HepG2 (cell line): ENCODE measurements at regions of chr5 and their contacts with region 1.

Region 1: GRCh38 chr5:132807163-132807838 is 5.8 kb upstream of the SOWAHA start:
- DNase-seq: peak; percentile 99
- ATAC-seq: peak; percentile 97
- H3K4me3 ChIP-seq: peak overlapping the region; percentile 64 to 85 (median 82)
- H3K27ac ChIP-seq: peak overlapping the region; percentile 100
- H3K4me1 ChIP-seq: peaks cover 58% of the 10 kb centered on the region
- H3K27me3 ChIP-seq: no peaks in the 10 kb centered on the region; a peak in 1 of 5 replicates
- CTCF ChIP-seq: peak; percentile 92
- EP300 ChIP-seq: peak; percentile 81 to 93
- POLR2A ChIP-seq: peak; percentile 81 to 95
- RAD21 ChIP-seq: peak; percentile 95

Region 2: DNA sequence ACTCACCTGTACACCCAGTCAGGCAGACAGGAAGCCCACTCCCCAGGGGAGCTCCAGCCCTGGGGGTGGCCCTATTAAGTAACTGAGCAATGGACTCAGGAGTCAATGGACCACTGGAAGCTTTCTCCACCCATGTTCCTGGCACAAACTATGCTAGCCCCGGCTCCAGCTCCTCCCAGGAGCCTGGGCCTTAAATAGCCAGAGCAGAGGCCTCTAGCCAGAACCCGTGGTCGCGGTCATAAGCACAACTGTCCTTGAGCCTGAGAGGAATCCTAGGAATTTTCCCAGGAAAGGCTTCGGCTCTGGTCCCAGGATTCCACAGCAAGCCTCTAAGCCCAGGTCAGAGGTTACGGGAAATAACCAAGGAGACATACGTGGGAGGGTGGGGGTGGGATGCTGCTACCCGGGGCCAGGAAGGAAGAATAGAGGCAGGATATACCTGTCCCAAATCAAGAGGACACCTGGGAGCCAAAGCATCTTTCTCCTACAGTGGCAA is 35.8 kb before region 1 on chr5:
- CTCF ChIA-PET with region 1: no interaction called
- POLR2A ChIA-PET with region 1: interaction called, 21 read pairs
- in situ Hi-C with region 1: no loop called
- intact Hi-C with region 1: loop called (anchors 1 kb)
- DNase-seq: peak; percentile 90
- ATAC-seq: peak; percentile 83
- H3K4me3 ChIP-seq: peak overlapping the region in 1 of 3 experiments; percentile 49; a peak in 1 of 6 replicates
- H3K27ac ChIP-seq: peak overlapping the region; percentile 71
- H3K4me1 ChIP-seq: peaks cover 57% of the 10 kb centered on the region
- H3K27me3 ChIP-seq: no peaks in the 10 kb centered on the region
- CTCF ChIP-seq: no peak
- EP300 ChIP-seq: no peak
- POLR2A ChIP-seq: peak in 1 of 2 experiments; percentile 44; a peak in 1 of 4 replicates
- RAD21 ChIP-seq: no peak

Region 3: DNA sequence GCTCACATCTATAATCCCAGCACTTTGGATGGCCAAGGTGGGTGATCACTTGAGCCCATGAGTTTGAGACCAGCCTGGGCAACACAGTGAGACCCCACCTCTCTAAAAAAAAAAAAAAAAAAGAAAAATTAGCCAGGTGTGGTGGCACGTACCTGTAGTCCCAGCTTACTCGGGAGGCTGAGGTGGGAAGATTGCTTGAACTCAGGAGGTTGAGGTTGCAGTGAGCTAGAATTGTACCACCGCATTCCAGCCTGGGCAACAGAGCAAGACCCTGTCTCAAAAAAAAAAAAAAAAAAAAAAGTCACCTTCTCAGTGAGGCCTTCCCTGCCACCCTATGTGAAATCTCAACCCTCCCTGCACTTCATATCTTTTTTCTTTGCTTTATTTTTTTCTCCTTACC is 16.3 kb before region 1 on chr5:
- CTCF ChIA-PET with region 1: no interaction called
- POLR2A ChIA-PET with region 1: interaction called, 11 read pairs
- in situ Hi-C with region 1: no loop called
- intact Hi-C with region 1: no loop called
- DNase-seq: no peak
- ATAC-seq: no peak
- H3K4me3 ChIP-seq: no peak overlapping the region
- H3K27ac ChIP-seq: no peak overlapping the region
- H3K4me1 ChIP-seq: peaks cover 21% of the 10 kb centered on the region; the same call in 1 of the 2 replicates
- H3K27me3 ChIP-seq: no peaks in the 10 kb centered on the region
- CTCF ChIP-seq: no peak
- EP300 ChIP-seq: no peak
- POLR2A ChIP-seq: no peak
- RAD21 ChIP-seq: no peak

Region 4: GRCh38 chr5:132829742-132830435 is 22.6 kb after region 1 on chr5:
- CTCF ChIA-PET with region 1: no interaction called
- POLR2A ChIA-PET with region 1: interaction called, 55 read pairs
- in situ Hi-C with region 1: no loop called
- intact Hi-C with region 1: no loop called
- DNase-seq: peak; percentile 56
- ATAC-seq: peak; percentile 87
- H3K4me3 ChIP-seq: peak overlapping the region; percentile 79 to 94 (median 93)
- H3K27ac ChIP-seq: peak overlapping the region; percentile 90
- H3K4me1 ChIP-seq: peaks cover 61% of the 10 kb centered on the region
- H3K27me3 ChIP-seq: no peaks in the 10 kb centered on the region
- CTCF ChIP-seq: peak; percentile 96
- EP300 ChIP-seq: no peak; a peak in 1 of 4 replicates
- POLR2A ChIP-seq: peak in 1 of 2 experiments; percentile 47; a peak in 1 of 4 replicates
- RAD21 ChIP-seq: peak; percentile 98

Region 5: DNA sequence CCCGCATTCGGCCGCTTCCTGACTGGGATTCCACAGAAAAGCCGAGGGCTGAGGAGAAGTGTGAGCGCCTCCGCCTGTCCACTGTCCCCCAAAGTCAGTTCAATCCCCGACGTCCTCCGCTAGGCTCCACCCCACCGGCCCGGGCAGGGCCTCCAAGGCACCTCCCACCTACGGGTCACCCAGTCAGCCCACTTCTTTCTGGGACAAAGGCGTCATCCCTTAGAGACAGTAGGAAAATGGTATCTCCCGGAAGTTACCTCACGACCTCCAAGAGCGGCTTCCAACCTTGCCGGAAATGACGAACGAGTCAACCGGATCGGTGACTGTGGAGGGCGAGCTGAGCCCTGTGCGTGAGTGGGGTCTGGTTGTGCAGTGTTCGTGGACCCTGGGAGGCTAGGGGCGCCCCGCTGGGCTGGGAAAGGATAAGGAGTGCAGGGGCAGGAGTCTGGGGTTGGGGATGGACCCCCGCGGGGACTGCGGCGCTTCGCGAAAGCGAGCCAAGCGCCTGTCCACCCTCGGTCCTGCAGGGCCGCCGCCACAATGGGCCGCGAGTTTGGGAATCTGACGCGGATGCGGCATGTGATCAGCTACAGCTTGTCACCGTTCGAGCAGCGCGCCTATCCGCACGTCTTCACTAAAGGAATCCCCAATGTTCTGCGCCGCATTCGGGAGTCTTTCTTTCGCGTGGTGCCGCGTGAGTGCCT is 59.2 kb after region 1 on chr5 and contains the starts of genes GDF9 and UQCRQ:
- CTCF ChIA-PET with region 1: interaction called, 3 read pairs
- POLR2A ChIA-PET with region 1: interaction called, 21 read pairs
- in situ Hi-C with region 1: no loop called
- intact Hi-C with region 1: loop called (anchors 1 kb)
- DNase-seq: peak; percentile 100
- ATAC-seq: peak; percentile 97
- H3K4me3 ChIP-seq: peak within 1 kb of the TSS; percentile 74 to 88 (median 87)
- H3K27ac ChIP-seq: peak within 1 kb of the TSS; percentile 86
- H3K4me1 ChIP-seq: peaks cover 60% of the 10 kb centered on the region
- H3K27me3 ChIP-seq: no peaks in the 10 kb centered on the region; a peak in 1 of 5 replicates
- CTCF ChIP-seq: peak; percentile 95
- EP300 ChIP-seq: peak in 1 of 2 experiments; percentile 54; a peak in 1 of 4 replicates
- POLR2A ChIP-seq: peak; percentile 90 to 95
- RAD21 ChIP-seq: peak; percentile 92
- total RNA-seq, gene GDF9: 0.07 and 0.38 TPM in 2 replicates
- total RNA-seq, gene UQCRQ: 575 and 610 TPM in 2 replicates